Mammary epithelial cell (primary cell): ENCODE measurements at regions of chr2 and their contacts with region 1.

Region 1: GRCh38 chr2:161556440-161556839 is 67.8 kb upstream of the SLC4A10 start:
- DNase-seq: no peak
- H3K4me3 ChIP-seq: no peak overlapping the region
- H3K27ac ChIP-seq: no peak overlapping the region
- H3K4me1 ChIP-seq: no peaks in the 10 kb centered on the region
- H3K27me3 ChIP-seq: peaks cover 2% of the 10 kb centered on the region
- CTCF ChIP-seq: peak in 1 of 2 donors; percentile 5

Region 2: DNA sequence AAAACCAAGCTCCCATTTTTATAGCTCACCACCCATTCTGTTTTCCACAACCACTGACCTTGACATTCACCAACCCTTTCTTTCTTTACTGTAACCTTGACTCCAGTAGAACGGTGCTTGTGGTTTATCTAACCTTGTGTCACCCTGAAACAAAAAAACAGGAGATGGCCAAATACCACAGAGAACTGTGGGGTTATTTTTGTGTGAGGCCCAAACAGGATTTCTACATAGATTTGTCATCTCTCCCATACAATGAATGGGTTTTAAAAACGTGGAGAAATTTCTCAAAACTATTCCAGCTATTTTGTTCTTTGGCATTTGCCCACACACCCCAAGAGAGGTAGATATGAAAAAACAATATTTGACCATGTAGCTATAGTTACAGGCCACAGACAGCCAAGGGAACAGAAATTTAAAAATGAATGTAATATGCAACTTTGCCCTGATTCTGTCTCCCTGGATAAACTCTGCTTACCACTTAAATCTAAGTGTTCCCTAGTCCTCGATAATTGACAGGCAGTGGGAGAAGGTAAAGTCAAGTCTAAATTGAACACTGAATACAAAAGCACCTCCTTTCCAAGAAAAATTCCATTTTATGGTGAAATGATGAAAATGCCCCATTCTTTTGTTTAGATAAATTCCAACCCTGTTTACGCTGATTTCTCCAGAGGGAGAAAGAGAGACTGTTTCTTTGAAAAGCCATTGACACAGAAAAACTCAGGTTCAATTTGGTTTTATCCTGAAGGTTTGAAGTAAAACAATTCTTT is 627.4 kb before region 1 on chr2:
- CTCF ChIA-PET with region 1: no interaction called
- dilution Hi-C with region 1: no loop called
- in situ Hi-C with region 1: no loop called
- intact Hi-C with region 1: no loop called
- DNase-seq: peak; percentile 33
- H3K4me3 ChIP-seq: no peak overlapping the region
- H3K27ac ChIP-seq: no peak overlapping the region
- H3K4me1 ChIP-seq: no peaks in the 10 kb centered on the region
- H3K27me3 ChIP-seq: no peaks in the 10 kb centered on the region
- CTCF ChIP-seq: no peak

Region 3: DNA sequence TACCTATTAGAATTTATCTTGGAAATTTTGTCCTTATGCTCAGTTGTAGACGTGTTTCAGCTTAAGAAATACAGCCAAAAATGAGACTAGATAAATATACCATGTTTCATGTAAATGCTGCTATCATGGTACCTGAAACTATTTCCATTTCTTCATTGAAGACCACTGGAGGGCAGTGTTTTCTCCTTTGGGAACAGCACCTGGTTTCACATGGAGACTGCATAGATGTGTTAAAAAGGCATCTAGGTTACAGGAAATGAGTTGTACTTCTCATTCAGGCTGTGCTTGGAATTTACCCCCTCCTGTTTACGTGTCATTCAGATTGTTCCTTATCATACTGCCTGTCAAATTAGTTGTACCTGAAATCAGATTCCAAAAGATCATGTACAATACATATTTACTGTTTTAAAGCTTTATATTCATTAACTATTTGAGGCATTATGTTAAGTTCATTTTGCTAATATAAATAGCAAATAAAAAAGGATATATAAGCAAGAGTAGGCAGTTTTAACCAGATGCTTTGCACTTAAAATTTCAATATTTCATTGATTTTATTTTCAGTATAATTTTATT is 305.5 kb before region 1 on chr2:
- CTCF ChIA-PET with region 1: no interaction called
- dilution Hi-C with region 1: no loop called
- in situ Hi-C with region 1: loop called in 1 of 2 experiments (anchors 25 kb)
- intact Hi-C with region 1: loop called (anchors 2 kb)
- DNase-seq: peak; percentile 71
- H3K4me3 ChIP-seq: no peak overlapping the region
- H3K27ac ChIP-seq: no peak overlapping the region
- H3K4me1 ChIP-seq: no peaks in the 10 kb centered on the region
- H3K27me3 ChIP-seq: no peaks in the 10 kb centered on the region
- CTCF ChIP-seq: peak; percentile 75 to 77

Region 4: GRCh38 chr2:161283926-161284325 is 272.5 kb before region 1 on chr2:
- CTCF ChIA-PET with region 1: no interaction called
- dilution Hi-C with region 1: no loop called
- in situ Hi-C with region 1: no loop called
- intact Hi-C with region 1: loop called (anchors 1 kb)
- DNase-seq: no peak
- H3K4me3 ChIP-seq: no peak overlapping the region
- H3K27ac ChIP-seq: no peak overlapping the region
- H3K4me1 ChIP-seq: no peaks in the 10 kb centered on the region
- H3K27me3 ChIP-seq: no peaks in the 10 kb centered on the region
- CTCF ChIP-seq: no peak

Region 5: GRCh38 chr2:161662373-161662772 is 105.9 kb after region 1 on chr2:
- CTCF ChIA-PET with region 1: no interaction called
- dilution Hi-C with region 1: no loop called
- in situ Hi-C with region 1: no loop called
- intact Hi-C with region 1: no loop called
- DNase-seq: peak; percentile 11
- H3K4me3 ChIP-seq: no peak overlapping the region
- H3K27ac ChIP-seq: no peak overlapping the region
- H3K4me1 ChIP-seq: no peaks in the 10 kb centered on the region
- H3K27me3 ChIP-seq: no peaks in the 10 kb centered on the region
- CTCF ChIP-seq: no peak

Region 6: GRCh38 chr2:161754379-161754778 is 197.9 kb after region 1 on chr2:
- CTCF ChIA-PET with region 1: no interaction called
- dilution Hi-C with region 1: no loop called
- in situ Hi-C with region 1: no loop called
- intact Hi-C with region 1: no loop called
- DNase-seq: no peak
- H3K4me3 ChIP-seq: no peak overlapping the region
- H3K27ac ChIP-seq: no peak overlapping the region
- H3K4me1 ChIP-seq: no peaks in the 10 kb centered on the region
- H3K27me3 ChIP-seq: no peaks in the 10 kb centered on the region
- CTCF ChIP-seq: no peak

Region 7: DNA sequence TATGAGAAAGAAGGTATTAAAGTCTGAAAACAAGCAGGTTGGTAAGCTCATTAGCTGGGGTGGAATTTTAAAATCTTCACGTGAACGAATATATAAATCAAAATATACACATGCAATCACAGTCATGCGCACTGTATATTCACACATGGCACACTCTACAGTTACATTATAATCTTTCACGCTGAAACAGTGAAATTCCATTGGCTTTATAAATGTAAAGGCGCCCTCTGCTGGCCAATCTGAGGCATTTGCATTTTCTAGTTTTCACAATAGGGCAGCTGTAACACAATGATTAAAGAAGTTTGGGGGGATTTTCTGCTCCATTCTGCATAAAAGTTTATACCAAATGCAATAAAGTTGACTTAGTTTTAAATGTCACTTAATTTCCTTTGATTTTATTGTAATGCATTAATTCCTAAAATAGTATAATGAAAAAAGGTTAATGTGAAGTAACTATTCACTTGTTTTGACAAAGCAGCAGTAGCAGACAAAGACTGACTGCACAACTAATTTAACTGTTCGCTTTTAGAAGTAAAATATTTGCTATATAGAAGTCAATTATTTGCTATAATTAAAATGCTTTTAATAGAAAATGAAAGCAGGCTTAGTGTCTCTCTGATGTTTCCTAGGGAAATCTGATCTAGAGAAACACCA is 744.8 kb after region 1 on chr2:
- CTCF ChIA-PET with region 1: no interaction called
- dilution Hi-C with region 1: no loop called
- in situ Hi-C with region 1: no loop called
- intact Hi-C with region 1: no loop called
- DNase-seq: peak; percentile 33
- H3K4me3 ChIP-seq: peak overlapping the region in 1 of 3 experiments; percentile 8
- H3K27ac ChIP-seq: no peak overlapping the region
- H3K4me1 ChIP-seq: no peaks in the 10 kb centered on the region
- H3K27me3 ChIP-seq: no peaks in the 10 kb centered on the region
- CTCF ChIP-seq: peak; percentile 72 to 89